ENCODE measurements at regions of chr4 and their contacts with region 1.

Region 1: DNA sequence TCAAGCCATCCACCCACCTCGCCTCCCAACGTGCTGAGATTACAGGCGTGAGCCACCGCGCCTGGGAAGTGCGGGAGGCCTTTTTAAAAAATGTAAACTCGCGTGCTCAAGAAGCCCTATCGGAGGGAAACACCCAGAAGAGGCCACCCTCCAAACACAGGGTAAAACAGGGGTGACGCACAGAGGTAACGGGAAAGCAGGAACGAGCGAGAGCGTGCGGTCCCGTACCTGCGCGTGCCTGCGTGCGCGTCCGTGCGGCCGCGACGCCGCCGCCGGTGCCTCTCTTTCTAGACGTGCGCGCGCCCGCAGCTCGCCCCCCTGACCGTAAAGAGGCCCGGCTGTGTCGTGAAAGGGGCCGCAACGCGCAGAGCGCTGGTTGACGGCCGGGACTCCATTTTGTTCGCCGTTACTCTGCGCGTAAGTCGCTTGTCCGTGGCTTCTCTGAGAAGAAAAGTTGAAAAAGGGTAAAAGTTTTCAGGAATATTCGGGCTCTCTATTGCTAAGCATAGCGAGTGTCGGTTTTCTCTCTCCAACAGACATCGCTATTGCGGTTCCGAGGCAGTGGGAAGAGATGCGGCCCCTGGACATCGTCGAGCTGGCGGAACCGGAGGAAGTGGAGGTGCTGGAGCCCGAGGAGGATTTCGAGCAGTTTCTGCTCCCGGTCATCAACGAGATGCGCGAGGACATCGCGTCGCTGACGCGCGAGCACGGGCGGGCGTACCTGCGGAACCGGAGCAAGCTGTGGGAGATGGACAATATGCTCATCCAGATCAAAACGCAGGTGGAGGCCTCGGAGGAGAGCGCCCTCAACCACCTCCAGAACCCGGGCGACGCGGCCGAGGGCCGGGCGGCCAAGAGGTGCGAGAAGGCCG is at the start of gene MRFAP1:
- DNase-seq: peak; percentile 97
- H3K4me3 ChIP-seq: peak within 1 kb of the TSS; percentile 65 to 96 (median 88)
- H3K27ac ChIP-seq: peak within 1 kb of the TSS; percentile 95 to 99 (median 98)
- H3K4me1 ChIP-seq: peaks cover 17 to 46% (median 35%) of the 10 kb centered on the region in 6 donors
- H3K27me3 ChIP-seq: no peaks in the 10 kb centered on the region
- CTCF ChIP-seq: peak in 2 of 11 experiments; percentile 8 to 19
- POLR2A ChIP-seq: peak; percentile 22 to 57 (median 55)
- total RNA-seq, gene MRFAP1: 181 to 265 (median 227) TPM

Region 2: GRCh38 chr4:6372649-6373525 is 267.6 kb before region 1 on chr4:
- intact Hi-C with region 1: no loop called
- DNase-seq: no peak
- H3K4me3 ChIP-seq: no peak overlapping the region
- H3K27ac ChIP-seq: no peak overlapping the region
- H3K4me1 ChIP-seq: peaks cover 0 to 24% (median 2%) of the 10 kb centered on the region in 6 donors
- H3K27me3 ChIP-seq: peaks cover 0 to 46% (median 0%) of the 10 kb centered on the region in 7 donors
- CTCF ChIP-seq: no peak
- POLR2A ChIP-seq: no peak

Region 3: DNA sequence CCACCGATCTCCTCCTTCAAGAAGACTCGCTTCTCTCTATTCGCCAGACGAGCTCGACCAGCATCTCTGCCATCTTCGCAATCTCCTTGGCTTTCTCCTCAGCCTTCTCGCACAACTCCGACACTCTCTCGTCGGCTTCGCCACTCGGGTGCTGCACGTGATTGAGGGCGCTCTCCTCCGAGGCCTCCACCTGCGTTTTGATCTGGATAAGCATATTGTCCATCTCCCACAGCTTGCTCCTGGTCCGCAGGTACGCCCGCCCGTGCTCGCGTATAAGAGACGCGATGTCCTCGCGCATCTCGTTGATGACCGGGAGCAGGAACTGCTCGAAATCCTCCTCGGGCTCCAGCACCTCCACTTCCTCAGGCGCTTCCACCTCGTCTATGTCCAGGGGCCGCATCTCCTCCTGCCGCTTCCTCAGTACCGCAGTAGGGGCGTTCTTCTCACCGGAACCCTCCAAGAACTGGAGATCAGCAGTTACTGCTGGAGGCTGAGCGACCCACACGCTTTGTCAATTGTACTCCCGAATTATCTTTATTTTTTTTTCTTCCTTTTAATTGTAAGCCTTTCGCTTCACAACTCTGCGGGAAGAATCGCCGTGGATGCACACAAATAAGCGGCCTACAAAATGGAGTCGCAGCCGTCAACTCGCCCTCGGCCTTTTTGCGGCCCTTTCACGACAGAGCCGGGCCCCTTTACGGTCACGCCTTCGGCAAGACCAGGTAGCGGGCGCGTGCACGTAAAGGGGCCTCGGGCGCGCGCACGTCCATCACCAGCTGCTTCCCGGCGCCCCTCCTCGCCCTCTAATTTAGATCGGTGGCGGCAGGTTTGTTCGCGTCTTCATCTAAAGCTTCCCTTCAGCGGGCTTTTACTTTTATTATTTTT is 68.9 kb after region 1 on chr4 and contains the start of gene MRFAP1L1:
- intact Hi-C with region 1: loop called (anchors 5 kb)
- DNase-seq: peak; percentile 98
- H3K4me3 ChIP-seq: peak within 1 kb of the TSS; percentile 74 to 94 (median 78)
- H3K27ac ChIP-seq: peak within 1 kb of the TSS; percentile 67 to 95 (median 92)
- H3K4me1 ChIP-seq: peaks cover 34 to 61% (median 47%) of the 10 kb centered on the region in 6 donors
- H3K27me3 ChIP-seq: no peaks in the 10 kb centered on the region
- CTCF ChIP-seq: peak in 2 of 11 experiments; percentile 22 to 28
- POLR2A ChIP-seq: peak in 1 of 3 donors; percentile 5
- total RNA-seq, gene MRFAP1L1: 45.6 to 96.9 (median 57.1) TPM